ENCODE measurements at regions of chr1 and their contacts with region 1.

Region 1: GRCh38 chr1:226547754-226548191 is 791 bp upstream of the STUM start:
- DNase-seq: peak; percentile 85
- H3K4me3 ChIP-seq: no peak overlapping the region
- H3K27ac ChIP-seq: no peak overlapping the region
- H3K4me1 ChIP-seq: peaks cover 10% of the 10 kb centered on the region
- H3K27me3 ChIP-seq: no peaks in the 10 kb centered on the region
- CTCF ChIP-seq: peak; percentile 56 to 84 (median 76)
- POLR2A ChIP-seq: no peak

Region 2: GRCh38 chr1:226233293-226233692 is 314.5 kb before region 1 on chr1:
- intact Hi-C with region 1: no loop called
- DNase-seq: no peak
- H3K4me3 ChIP-seq: no peak overlapping the region
- H3K27ac ChIP-seq: no peak overlapping the region
- H3K4me1 ChIP-seq: no peaks in the 10 kb centered on the region
- H3K27me3 ChIP-seq: no peaks in the 10 kb centered on the region
- CTCF ChIP-seq: no peak
- POLR2A ChIP-seq: no peak

Region 3: GRCh38 chr1:226424228-226425003 is 123.4 kb before region 1 on chr1:
- intact Hi-C with region 1: loop called (anchors 5 kb)
- DNase-seq: no peak
- H3K4me3 ChIP-seq: no peak overlapping the region
- H3K27ac ChIP-seq: no peak overlapping the region
- H3K4me1 ChIP-seq: no peaks in the 10 kb centered on the region
- H3K27me3 ChIP-seq: no peaks in the 10 kb centered on the region
- CTCF ChIP-seq: peak in 3 of 4 experiments; percentile 41 to 76 (median 60)
- POLR2A ChIP-seq: no peak

Region 4: DNA sequence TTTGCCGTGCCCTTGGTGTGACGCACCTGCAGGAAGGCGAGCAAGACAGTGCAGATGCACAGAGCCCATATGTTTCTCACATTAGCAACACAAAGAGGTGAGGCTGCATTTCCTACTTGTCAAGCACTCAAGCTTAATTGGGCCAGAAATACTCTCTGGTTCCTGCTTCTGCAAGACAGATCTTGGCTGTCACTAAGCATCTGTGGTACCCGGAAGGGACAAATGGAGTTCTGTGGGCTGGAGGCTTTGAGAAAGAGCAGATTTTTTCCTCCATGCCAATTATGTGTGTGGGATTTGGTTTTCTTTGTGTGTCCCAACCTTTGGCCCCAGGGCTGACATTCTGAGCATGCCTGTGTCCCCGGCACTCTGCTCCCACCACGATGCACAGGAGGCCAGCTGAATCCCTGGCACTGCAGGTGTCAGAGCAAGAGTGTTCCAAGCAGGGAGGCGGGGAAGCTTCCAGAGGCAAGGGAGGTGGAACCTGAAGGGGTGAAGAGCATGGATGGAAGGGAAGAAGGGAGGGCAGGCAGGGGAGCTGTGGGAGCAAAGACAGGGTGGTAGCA is 51.2 kb before region 1 on chr1:
- intact Hi-C with region 1: no loop called
- DNase-seq: no peak
- H3K4me3 ChIP-seq: no peak overlapping the region
- H3K27ac ChIP-seq: no peak overlapping the region
- H3K4me1 ChIP-seq: no peaks in the 10 kb centered on the region
- H3K27me3 ChIP-seq: no peaks in the 10 kb centered on the region
- CTCF ChIP-seq: no peak
- POLR2A ChIP-seq: no peak

Region 5: DNA sequence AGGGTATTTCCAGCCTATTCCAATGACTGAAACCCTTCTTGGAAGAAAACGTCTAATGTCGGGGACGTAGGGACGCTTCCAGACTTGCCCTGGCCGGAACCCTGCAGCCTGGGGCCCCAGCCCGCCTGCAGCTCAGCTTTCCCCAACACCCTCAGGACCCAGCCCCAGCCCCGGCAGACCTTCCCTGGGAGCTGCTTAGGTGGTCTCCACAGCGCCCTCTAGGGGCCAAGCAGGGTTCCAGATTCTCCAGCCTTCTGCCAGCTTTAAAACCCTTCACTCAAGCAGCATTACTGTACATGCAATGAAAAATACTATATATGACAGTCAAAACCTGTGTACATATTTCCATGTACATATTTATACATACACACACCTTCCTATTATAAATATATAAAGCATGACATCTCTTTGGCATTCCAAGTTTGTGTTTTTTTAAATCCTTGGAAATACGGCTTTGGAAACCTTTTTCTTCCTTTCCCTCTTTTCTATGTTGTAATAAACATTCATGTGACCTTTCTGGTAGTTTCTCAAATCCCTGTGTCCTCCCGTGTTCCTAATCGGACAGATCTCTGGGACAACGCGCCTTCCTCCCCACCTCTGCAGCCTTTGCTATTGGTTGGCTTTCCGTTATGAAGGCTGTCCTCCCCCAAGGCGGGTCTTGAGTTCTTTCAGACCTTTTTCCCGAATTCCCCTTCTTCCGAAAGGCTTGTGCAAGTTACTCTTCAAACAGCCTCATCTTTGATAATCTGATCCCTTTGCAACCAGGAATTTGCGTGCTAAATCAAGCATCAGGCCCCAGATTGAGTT is 61.1 kb after region 1 on chr1:
- intact Hi-C with region 1: loop called (anchors 2 kb)
- DNase-seq: peak; percentile 36
- H3K4me3 ChIP-seq: no peak overlapping the region
- H3K27ac ChIP-seq: no peak overlapping the region
- H3K4me1 ChIP-seq: no peaks in the 10 kb centered on the region
- H3K27me3 ChIP-seq: no peaks in the 10 kb centered on the region
- CTCF ChIP-seq: peak; percentile 35 to 65 (median 62)
- POLR2A ChIP-seq: no peak

Region 6: DNA sequence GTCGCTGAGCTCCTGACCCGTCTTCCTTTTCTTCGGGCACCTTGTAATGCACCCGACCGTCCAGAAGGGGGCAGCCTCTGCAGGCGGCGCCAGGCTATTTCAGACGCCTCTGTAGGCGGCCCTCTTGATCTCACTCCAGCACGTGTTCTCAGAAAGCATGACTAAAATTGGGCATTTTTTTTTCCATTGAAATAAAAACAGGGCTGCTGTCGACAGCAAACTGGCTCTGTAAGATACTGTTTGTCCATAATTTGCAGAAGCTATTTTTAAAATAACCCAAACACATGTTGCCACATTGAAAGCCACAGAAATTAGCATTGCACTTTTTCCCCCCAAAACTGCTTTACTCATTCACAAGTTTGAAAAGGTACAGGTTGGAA is 78.8 kb after region 1 on chr1:
- intact Hi-C with region 1: loop called (anchors 5 kb)
- DNase-seq: peak; percentile 51
- H3K4me3 ChIP-seq: no peak overlapping the region
- H3K27ac ChIP-seq: no peak overlapping the region
- H3K4me1 ChIP-seq: no peaks in the 10 kb centered on the region
- H3K27me3 ChIP-seq: no peaks in the 10 kb centered on the region
- CTCF ChIP-seq: peak; percentile 90 to 93 (median 92)
- POLR2A ChIP-seq: no peak

Region 7: GRCh38 chr1:226649780-226650179 is 102.0 kb after region 1 on chr1:
- intact Hi-C with region 1: no loop called
- DNase-seq: no peak
- H3K4me3 ChIP-seq: no peak overlapping the region
- H3K27ac ChIP-seq: peak overlapping the region in 1 of 2 donors; percentile 42
- H3K4me1 ChIP-seq: peaks cover 16% of the 10 kb centered on the region
- H3K27me3 ChIP-seq: no peaks in the 10 kb centered on the region
- CTCF ChIP-seq: peak in 2 of 4 experiments; percentile 31 to 51
- POLR2A ChIP-seq: no peak

Region 8: GRCh38 chr1:226827968-226828513 is 280.3 kb after region 1 on chr1:
- intact Hi-C with region 1: loop called (anchors 5 kb)
- DNase-seq: peak; percentile 93
- H3K4me3 ChIP-seq: no peak overlapping the region
- H3K27ac ChIP-seq: peak overlapping the region in 1 of 2 donors; percentile 31
- H3K4me1 ChIP-seq: no peaks in the 10 kb centered on the region
- H3K27me3 ChIP-seq: no peaks in the 10 kb centered on the region
- CTCF ChIP-seq: peak; percentile 88 to 94 (median 92)
- POLR2A ChIP-seq: no peak

Measured in prostate gland (tissue), 2 donors.